CD4-positive, alpha-beta T cell (primary cell): ENCODE measurements at regions of chr10 and their contacts with region 1.

Region 1: DNA sequence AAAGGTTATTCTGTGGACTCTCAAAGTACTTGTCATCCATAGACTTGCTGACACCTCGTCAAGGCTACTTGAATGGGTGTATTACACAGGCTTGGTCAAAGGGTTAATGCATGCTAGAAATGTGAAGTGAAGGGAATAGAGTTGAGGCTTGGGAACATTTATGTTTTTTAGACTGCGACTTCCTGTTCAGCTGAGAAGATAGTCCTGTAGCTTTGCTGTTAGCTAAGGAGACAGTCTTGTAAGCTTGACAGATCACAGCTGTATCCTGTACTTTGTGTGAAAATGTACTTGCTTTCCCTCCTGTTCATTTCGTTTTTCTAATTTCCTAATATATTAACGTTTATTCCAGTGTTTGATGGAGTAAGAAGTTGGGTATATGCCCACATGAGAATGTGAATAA is 52.1 kb downstream of the ADD3 start:
- DNase-seq: no peak
- ATAC-seq: peak; percentile 55
- H3K4me3 ChIP-seq: no peak overlapping the region
- H3K4me3 Mint-ChIP-seq: peak overlapping the region; percentile 67
- H3K27ac ChIP-seq: peak overlapping the region in 1 of 2 donors; percentile 18
- H3K27ac Mint-ChIP-seq: peak overlapping the region; percentile 79
- H3K4me1 ChIP-seq: peaks cover 40% of the 10 kb centered on the region
- H3K4me1 Mint-ChIP-seq: peaks cover 90% of the 10 kb centered on the region
- H3K27me3 ChIP-seq: no peaks in the 10 kb centered on the region
- H3K27me3 Mint-ChIP-seq: no peaks in the 10 kb centered on the region
- CTCF ChIP-seq: no peak

Region 2: GRCh38 chr10:110093722-110094121 is 33.8 kb after region 1 on chr10:
- CTCF ChIA-PET with region 1: no interaction called
- POLR2A ChIA-PET with region 1: interaction called, 3 read pairs
- intact Hi-C with region 1: loop called in 1 of 2 experiments (anchors 5 kb)
- DNase-seq: no peak
- ATAC-seq: no peak
- H3K4me3 ChIP-seq: no peak overlapping the region
- H3K4me3 Mint-ChIP-seq: peak overlapping the region; percentile 5
- H3K27ac ChIP-seq: no peak overlapping the region
- H3K27ac Mint-ChIP-seq: peak overlapping the region; percentile 15
- H3K4me1 ChIP-seq: peaks cover 12% of the 10 kb centered on the region
- H3K4me1 Mint-ChIP-seq: peaks cover 90% of the 10 kb centered on the region
- H3K27me3 ChIP-seq: no peaks in the 10 kb centered on the region
- H3K27me3 Mint-ChIP-seq: no peaks in the 10 kb centered on the region
- CTCF ChIP-seq: no peak

Region 3: DNA sequence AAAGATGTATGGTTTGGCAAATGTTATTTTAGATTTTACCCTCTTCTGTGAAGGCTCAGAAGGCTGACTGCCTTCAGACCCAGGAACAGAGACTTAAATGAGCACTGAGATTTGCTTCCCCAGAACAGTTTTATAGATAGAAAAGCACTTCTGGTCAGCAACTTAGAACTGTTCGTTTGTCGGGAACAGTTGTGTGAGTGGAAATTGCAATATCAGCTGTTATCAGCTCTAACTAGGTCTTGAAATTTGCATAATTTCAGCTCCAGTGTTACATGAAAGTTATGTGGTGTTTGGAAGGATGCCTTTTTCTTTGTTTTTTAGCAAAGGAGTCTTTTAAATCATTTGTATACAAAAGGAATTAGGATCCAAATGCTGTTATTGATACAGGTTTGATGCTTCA is 63.7 kb after region 1 on chr10:
- CTCF ChIA-PET with region 1: no interaction called
- POLR2A ChIA-PET with region 1: no interaction called
- intact Hi-C with region 1: no loop called
- DNase-seq: no peak
- ATAC-seq: no peak
- H3K4me3 ChIP-seq: no peak overlapping the region
- H3K4me3 Mint-ChIP-seq: no peak overlapping the region
- H3K27ac ChIP-seq: no peak overlapping the region
- H3K27ac Mint-ChIP-seq: peak overlapping the region; percentile 58
- H3K4me1 ChIP-seq: no peaks in the 10 kb centered on the region
- H3K4me1 Mint-ChIP-seq: peaks cover 4% of the 10 kb centered on the region
- H3K27me3 ChIP-seq: no peaks in the 10 kb centered on the region
- H3K27me3 Mint-ChIP-seq: no peaks in the 10 kb centered on the region
- CTCF ChIP-seq: no peak